ENCODE measurements at regions of chrX and their contacts with region 1.

Region 1: DNA sequence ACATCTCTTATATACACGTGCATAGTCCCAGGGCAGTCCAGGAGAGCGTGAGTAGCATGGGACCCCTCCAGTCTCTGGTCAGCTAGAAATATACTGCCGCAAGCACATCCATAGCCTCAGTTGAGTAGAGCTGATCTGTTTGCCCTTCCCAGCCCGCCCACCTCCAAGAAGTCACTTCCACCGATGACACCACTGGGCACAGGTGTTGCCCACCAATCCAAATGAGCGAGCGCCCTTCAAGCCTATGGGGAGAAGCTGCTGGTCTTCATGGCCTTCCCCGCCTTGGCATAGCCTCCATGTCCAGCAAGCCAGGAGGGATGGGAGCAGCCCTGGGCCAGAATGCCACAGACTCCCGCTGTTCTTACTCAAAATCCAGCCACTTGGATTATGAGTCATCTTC is 10.2 kb downstream of the DUSP9 start:
- DNase-seq: no peak
- H3K4me3 ChIP-seq: no peak overlapping the region
- H3K27ac ChIP-seq: no peak overlapping the region
- H3K4me1 ChIP-seq: no peaks in the 10 kb centered on the region
- H3K27me3 ChIP-seq: peaks cover 0 to 9% of the 10 kb centered on the region in 2 experiments
- CTCF ChIP-seq: no peak
- POLR2A ChIP-seq: no peak

Region 2: DNA sequence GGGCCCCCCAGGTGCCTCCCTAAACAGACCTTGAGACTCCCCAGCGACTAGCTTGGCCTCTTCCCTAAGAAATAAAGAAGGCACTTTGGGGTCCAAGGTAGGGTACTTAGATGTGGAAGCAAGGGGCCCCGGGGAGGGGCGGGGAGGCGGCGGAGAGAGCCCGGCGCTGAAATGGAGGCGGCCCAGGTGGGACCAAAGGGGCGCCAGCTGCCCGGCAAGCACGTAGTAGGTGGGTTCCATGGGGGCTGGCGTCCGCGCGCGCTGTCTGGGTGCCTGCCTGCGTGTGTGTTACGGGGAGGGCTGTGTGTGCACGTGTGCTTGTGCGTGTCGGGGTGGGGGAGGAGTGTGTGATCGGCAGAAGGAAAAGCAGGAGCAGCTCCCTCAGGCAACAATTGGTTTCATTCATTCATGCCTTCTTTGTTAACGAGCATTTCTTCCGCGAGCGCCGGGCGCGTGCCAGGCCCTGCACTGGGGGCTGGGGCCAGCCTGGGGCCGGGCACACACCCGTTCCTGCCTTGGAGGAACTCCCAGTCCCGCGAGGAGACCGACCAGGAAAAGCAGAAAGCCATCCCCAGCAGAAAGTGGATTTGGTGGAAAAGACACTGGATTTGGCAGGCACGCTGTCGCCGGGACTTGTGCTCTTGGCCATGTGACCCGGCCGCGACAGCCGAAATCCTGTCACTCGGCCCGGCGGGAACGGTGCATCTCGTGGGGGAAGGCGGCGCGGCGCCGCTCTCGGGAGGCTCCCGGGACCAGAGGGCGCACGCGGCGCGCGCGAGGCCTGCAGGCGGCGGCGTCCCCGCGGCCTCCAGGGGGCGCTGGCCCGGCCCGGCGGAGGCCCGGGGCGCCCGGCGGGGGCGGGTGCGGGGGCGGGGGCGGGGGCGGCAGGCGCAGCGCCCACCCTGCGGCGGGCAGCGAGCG is 13.5 kb before region 1 on chrX:
- CTCF ChIA-PET with region 1: interaction called, 10 read pairs
- POLR2A ChIA-PET with region 1: no interaction called
- dilution Hi-C with region 1: no loop called
- intact Hi-C with region 1: no loop called
- DNase-seq: no peak
- H3K4me3 ChIP-seq: no peak overlapping the region
- H3K27ac ChIP-seq: no peak overlapping the region
- H3K4me1 ChIP-seq: no peaks in the 10 kb centered on the region
- H3K27me3 ChIP-seq: peaks cover 56 to 57% of the 10 kb centered on the region in 2 experiments
- CTCF ChIP-seq: peak in 1 of 2 donors; percentile 9
- POLR2A ChIP-seq: no peak